Right ventricle myocardium inferior (tissue), 1 donor: ENCODE measurements at regions of chr2 and their contacts with region 1.

Region 1: DNA sequence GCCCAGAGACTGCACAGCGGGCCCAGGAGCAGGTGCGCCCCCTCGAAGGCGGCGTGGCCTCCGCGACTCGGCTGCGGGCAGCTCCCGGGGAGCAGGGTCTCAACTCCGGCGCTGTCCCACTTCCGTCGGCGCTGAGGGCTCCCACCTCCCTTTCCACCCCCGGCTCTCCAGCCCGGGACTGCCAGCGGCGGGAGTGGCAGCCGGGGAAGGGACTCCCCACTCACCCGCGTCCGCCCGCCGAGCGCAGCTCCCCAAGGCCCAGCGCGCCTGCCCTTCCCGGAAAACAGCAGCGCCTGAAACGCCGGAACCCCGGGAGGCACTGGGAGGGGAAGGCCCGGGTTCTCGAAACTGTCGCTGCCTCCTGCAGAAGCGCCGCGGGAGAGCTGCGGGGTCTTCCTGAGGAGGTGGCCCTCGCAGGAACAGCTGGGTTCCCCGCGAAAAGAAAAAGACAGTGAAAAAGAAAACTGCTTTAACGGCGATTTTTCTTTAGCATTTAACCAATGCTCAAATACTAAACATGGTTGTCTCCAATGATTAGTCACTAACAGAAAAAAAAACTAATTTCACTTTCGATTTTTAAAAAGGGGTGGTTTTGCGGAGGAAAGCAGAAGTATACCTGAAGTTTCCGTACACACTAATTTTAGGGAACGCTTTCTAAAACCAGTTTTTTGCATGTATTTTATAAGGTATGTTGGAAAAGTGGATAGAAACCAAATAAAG is at the start of gene NMI:
- DNase-seq: peak; percentile 91
- ATAC-seq: peak; percentile 91
- total RNA-seq, gene NMI: 4.5 TPM

Region 2: GRCh38 chr2:151261231-151261976 is 28.1 kb before region 1 on chr2 and contains the start of gene RBM43:
- intact Hi-C with region 1: loop called (anchors 2 kb)
- DNase-seq: peak; percentile 93
- ATAC-seq: peak; percentile 96
- total RNA-seq, gene RBM43: 2.1 TPM

Region 3: DNA sequence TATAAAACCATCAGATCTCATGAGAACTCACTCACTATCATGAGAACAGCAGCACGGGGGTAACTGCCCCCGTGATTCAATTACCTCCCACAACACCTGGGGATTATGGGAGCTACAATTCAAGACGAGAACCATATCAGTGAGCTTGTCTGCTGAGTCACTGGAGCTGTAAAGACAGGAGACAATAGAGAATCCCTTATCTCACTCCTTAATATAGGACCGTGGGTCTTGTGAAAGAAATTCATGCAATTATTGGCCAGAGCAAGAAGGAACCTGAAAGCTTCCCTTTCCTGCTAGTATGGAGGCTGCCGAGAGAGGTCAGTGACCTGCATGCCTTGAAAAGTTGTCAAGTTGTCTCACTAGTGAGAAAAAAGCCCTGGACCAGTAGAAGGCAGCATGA is 58.4 kb after region 1 on chr2:
- intact Hi-C with region 1: no loop called
- DNase-seq: no peak
- ATAC-seq: no peak

Region 4: DNA sequence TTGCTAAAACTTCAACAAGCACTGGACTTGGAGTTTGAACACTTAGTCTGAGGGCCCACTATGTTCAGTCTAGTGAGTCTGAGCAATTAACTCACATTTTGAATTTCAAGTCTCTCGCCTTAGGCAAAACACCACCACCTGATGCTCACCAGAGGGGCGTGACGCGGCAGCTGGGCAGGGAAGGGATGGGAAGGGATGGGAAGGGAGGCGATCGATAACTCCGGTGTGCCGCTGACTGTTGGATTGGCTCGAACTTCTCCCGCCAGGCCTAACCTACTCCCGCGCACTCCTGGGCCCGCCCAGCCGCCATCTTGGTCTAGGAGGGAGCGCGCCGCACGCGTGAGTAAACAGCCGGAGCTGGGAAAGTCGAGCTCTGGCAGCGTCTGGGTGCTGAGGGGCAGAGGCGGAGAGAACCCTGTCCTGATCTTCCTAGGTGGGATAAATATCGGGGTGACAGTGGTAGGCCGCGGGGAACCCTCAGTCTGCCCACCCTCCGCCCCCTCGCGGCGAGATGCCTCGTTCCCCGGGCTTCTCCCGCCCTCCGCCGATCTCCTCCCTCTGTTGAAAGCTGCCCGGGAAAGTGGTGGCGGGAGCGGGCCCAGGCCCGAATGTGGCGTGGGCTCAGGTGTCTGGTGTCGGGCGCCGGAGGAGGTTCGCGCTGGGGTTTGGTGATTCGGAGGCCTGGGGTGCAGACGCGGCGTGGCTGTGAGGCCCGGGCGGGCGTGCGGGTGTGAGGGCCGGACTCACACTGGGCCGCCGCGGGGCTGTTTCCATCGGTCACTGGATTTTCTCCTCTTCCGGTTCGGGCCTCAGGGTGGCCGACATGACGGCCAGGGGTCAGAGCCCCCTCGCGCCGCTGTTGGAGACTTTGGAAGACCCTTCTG is 120.3 kb after region 1 on chr2 and contains the start of gene RIF1:
- intact Hi-C with region 1: loop called (anchors 10 kb)
- DNase-seq: peak; percentile 95
- ATAC-seq: peak; percentile 99
- total RNA-seq, gene RIF1: 12.7 TPM

Region 5: GRCh38 chr2:151900331-151900730 is 610.8 kb after region 1 on chr2:
- intact Hi-C with region 1: no loop called
- DNase-seq: no peak
- ATAC-seq: peak; percentile 20